ENCODE measurements at regions of chr5 and their contacts with region 1.

Region 1: DNA sequence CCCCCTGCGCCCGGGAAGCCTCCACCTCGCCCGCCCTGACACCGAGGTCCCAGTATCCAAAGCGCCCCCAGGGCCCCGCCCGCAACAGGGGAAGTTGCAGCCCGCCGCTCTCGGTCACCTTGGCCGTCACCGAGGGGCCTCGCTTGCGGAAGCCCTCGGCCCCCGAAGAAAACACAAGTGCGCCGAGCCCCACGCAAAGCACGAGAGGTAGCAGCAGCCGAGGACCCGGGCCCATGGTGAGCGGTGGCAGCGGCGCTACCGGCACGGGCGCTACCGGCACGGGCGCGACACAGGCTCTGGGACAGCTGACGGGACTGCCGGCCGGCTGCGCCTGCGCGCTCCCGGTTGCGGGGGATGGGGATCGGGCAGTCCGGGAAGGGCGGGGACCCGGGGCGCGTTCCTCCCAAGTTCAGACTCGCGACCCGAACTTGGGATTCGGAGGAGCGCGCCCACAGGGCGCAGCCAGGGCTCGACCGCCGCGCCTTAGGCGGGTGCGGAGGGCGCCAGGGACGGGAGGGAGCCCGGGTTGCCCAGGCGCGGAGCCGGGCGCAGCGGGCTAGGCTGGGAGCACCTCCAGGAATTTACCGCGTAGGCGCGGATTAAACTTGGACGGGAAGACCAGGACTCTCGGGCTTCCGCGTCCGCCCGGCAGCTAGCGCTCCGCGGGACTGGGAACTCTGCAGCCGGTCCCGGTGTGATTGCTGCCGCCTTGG is at the start of gene PPIC:
- DNase-seq: peak; percentile 90 to 93
- ATAC-seq: peak; percentile 96 to 98 (median 97)
- H3K4me3 ChIP-seq: peak within 1 kb of the TSS; percentile 91
- H3K27ac ChIP-seq: peak within 1 kb of the TSS; percentile 90
- H3K4me1 ChIP-seq: peaks cover 8% of the 10 kb centered on the region
- H3K27me3 ChIP-seq: no peaks in the 10 kb centered on the region
- CTCF ChIP-seq: no peak
- total RNA-seq, gene PPIC: 13.7 to 27.4 (median 16.5) TPM

Region 2: DNA sequence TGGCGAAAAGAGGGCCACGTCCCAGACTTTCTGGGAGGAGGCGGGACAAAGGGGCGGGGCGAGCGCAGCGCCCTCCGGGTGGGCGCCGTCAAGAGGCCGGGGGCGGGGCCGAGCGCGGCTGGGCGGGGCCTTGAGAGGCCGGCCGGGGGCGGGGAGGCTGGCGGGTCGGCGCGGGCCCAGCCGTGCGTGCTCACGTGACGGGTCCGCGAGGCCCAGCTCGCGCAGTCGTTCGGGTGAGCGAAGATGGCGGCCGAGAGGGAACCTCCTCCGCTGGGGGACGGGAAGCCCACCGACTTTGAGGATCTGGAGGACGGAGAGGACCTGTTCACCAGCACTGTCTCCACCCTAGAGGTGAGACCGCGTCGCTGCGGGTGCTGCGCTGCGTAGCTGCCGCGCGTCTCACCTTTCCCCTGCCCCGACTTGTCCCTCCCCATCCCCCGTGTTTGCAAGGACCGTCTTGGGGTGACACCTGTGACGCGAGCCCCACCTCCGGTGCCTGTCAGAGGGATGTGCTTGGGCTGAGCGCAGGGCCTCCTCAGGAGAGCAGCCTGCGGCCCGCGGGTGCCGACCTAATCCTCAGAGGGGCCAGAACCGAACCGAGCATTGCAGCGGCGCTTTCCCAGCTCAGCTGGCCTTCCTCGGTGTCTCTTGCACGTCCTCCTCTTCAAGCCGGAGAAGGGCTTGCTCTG is 261.5 kb before region 1 on chr5 and contains the start of gene SNX2:
- intact Hi-C with region 1: loop called in 1 of 2 experiments (anchors 5 kb)
- DNase-seq: peak; percentile 95 to 97
- ATAC-seq: peak; percentile 99 to 100 (median 99)
- H3K4me3 ChIP-seq: peak within 1 kb of the TSS; percentile 93
- H3K27ac ChIP-seq: peak within 1 kb of the TSS; percentile 88
- H3K4me1 ChIP-seq: peaks cover 10% of the 10 kb centered on the region
- H3K27me3 ChIP-seq: no peaks in the 10 kb centered on the region
- CTCF ChIP-seq: peak; percentile 34
- total RNA-seq, gene SNX2: 32.8 to 39.8 (median 35.4) TPM